B cell (primary cell): ENCODE measurements at regions of chr10 and their contacts with region 1.

Region 1: GRCh38 chr10:79532-80215 is 30.6 kb upstream of the TUBB8 start:
- DNase-seq: no peak
- ATAC-seq: no peak
- H3K4me3 ChIP-seq: no peak overlapping the region
- H3K4me3 Mint-ChIP-seq: no peak overlapping the region
- H3K27ac ChIP-seq: no peak overlapping the region
- H3K27ac Mint-ChIP-seq: no peak overlapping the region
- H3K4me1 ChIP-seq: peaks cover 6 to 14% of the 10 kb centered on the region in 2 donors
- H3K4me1 Mint-ChIP-seq: peaks cover 2% of the 10 kb centered on the region
- H3K27me3 ChIP-seq: peaks cover 0 to 43% (median 9%) of the 10 kb centered on the region in 4 experiments
- H3K27me3 Mint-ChIP-seq: peaks cover 40% of the 10 kb centered on the region
- CTCF ChIP-seq: no peak

Region 2: GRCh38 chr10:135132-135600 is 55.5 kb after region 1 on chr10 and contains the start of gene ZMYND11:
- CTCF ChIA-PET with region 1: no interaction called
- POLR2A ChIA-PET with region 1: no interaction called
- intact Hi-C with region 1: loop called (anchors 2 kb)
- DNase-seq: peak; percentile 81
- ATAC-seq: peak; percentile 52
- H3K4me3 ChIP-seq: peak within 1 kb of the TSS; percentile 64 to 73 (median 73)
- H3K4me3 Mint-ChIP-seq: peak within 1 kb of the TSS; percentile 92
- H3K27ac ChIP-seq: peak within 1 kb of the TSS; percentile 44 to 83
- H3K27ac Mint-ChIP-seq: peak within 1 kb of the TSS; percentile 97
- H3K4me1 ChIP-seq: peaks cover 16 to 19% of the 10 kb centered on the region in 2 donors
- H3K4me1 Mint-ChIP-seq: peaks cover 35% of the 10 kb centered on the region
- H3K27me3 ChIP-seq: peaks cover 0 to 22% (median 10%) of the 10 kb centered on the region in 4 experiments
- H3K27me3 Mint-ChIP-seq: peaks cover 15% of the 10 kb centered on the region
- CTCF ChIP-seq: no peak
- total RNA-seq, gene ZMYND11: 47.9 and 50.1 TPM in 2 replicates